ENCODE measurements at regions of chr16 and their contacts with region 1.

Region 1: DNA sequence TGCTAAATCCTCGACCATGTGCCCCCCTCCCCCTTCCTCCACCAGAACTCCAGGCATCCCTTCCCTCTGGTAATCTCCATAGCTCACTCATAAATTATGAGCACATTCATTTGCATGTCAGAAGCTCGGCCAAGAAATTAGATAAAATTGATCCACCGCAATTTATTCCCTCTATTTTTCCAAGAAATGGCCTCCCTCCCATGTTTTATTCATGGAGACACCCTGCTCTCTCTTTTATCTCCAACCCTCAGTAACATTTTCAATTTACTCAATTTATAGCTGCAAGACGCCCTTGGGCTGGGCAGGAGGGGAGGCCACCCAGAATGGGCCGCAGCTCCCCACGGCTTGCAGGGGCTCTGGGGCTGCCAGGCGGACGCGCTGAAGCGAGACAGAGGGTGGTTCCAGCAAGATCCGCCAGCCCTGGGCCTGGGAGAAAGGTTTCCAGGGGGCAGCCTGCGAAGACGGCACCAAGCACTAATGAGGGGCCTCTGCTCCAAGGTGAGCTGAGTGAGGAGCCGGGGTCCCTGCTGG is 54.7 kb upstream of the ZNF423 start:
- DNase-seq: no peak
- H3K4me3 ChIP-seq: no peak overlapping the region
- H3K27ac ChIP-seq: no peak overlapping the region
- H3K4me1 ChIP-seq: no peaks in the 10 kb centered on the region
- H3K27me3 ChIP-seq: no peaks in the 10 kb centered on the region
- CTCF ChIP-seq: no peak
- EP300 ChIP-seq: no peak
- POLR2A ChIP-seq: no peak

Region 2: DNA sequence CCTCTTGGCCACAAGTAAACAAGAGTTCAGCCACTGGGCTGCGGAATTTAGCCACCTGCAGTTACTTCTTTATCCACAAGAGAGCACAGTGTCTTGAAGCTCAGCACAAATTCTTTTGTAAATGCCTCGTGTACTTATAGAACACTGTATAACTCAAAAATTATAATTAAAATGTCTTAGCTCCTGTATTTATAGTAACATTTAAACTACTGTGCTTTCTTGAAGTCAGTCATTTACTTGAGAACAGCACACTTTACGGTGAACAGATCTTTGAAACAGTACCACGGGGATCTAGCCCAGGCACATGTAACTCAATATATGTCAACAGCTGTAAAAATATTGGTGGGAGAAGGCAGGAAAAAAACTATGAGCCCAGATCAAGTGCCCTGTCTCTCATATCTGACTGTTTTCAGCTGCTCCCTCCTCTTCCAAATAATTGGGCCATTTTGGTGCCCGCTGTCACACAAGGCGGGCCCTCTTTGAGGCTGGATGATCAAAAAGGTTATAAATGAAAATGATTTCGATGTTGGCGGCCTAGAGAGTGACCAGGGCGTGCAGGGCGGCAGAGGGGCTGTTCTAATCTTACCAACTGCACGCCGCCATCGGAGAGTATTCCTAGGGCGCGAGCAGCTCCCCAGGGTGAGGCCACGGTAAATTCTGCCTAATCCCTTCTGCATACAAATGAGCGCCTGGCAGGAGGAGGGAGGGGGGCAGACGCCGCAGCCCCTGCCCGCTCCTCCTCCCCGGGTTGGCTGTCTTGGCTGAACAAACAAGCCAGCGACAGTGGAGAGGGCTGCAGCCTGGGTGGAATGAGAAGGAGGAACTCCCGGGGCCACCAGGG is 353.8 kb before region 1 on chr16:
- in situ Hi-C with region 1: no loop called
- intact Hi-C with region 1: no loop called
- DNase-seq: no peak
- H3K4me3 ChIP-seq: no peak overlapping the region
- H3K27ac ChIP-seq: no peak overlapping the region
- H3K4me1 ChIP-seq: no peaks in the 10 kb centered on the region
- H3K27me3 ChIP-seq: no peaks in the 10 kb centered on the region
- CTCF ChIP-seq: peak; percentile 27 to 40 (median 35)
- EP300 ChIP-seq: no peak
- POLR2A ChIP-seq: no peak

Region 3: GRCh38 chr16:49890876-49891275 is 19.7 kb before region 1 on chr16:
- in situ Hi-C with region 1: no loop called
- intact Hi-C with region 1: no loop called
- DNase-seq: peak; percentile 72
- H3K4me3 ChIP-seq: no peak overlapping the region
- H3K27ac ChIP-seq: no peak overlapping the region
- H3K4me1 ChIP-seq: no peaks in the 10 kb centered on the region
- H3K27me3 ChIP-seq: no peaks in the 10 kb centered on the region
- CTCF ChIP-seq: peak; percentile 30 to 68 (median 44)
- EP300 ChIP-seq: no peak
- POLR2A ChIP-seq: no peak

Region 4: DNA sequence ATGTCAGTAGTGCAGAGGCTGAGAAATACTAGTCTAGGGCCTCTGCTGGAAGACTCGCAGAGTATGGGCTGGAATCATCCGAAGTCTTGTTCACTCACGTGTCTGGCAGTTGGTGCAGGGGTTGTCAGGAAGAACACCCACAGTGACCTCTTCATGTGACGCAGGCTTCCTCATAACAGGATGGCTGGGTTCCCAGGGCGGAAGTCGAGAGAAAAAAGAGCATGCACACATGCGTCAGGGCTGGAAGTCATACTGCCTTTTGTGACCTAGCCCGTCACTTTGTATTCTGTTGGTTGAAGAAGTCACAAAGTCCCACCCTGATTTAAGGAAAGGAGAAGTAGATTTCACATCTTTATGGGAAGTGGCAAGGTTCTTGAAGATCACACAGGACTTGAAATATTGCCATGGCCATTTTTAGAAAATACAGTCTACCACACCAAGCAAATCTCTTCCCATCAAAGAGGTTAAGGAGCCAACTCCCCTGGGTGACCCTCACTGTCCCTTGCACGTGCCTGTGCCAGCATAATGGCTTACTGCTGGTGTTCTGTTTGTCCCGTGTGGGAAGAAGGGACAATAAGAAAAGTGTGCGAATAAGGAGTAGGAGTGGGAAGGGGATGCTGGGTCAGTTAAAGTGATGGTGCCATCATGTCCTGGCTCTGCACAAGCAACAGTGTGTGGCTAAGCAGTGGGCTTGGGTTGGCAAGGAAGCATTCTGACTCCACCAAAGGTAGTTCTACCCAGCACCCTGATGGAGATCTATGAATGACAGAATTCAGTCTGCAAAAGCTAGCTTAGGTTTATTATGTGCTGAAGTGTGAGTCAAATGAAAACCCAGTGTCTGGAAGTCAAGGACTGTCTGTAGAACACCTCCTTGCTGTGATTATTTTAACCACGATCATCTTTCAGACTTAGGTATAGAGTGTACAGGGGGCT is 183.3 kb after region 1 on chr16:
- in situ Hi-C with region 1: no loop called
- intact Hi-C with region 1: no loop called
- DNase-seq: peak; percentile 34
- H3K4me3 ChIP-seq: no peak overlapping the region
- H3K27ac ChIP-seq: peak overlapping the region; percentile 28 to 57 (median 37)
- H3K4me1 ChIP-seq: no peaks in the 10 kb centered on the region
- H3K27me3 ChIP-seq: no peaks in the 10 kb centered on the region
- CTCF ChIP-seq: no peak
- EP300 ChIP-seq: no peak
- POLR2A ChIP-seq: no peak

Region 5: DNA sequence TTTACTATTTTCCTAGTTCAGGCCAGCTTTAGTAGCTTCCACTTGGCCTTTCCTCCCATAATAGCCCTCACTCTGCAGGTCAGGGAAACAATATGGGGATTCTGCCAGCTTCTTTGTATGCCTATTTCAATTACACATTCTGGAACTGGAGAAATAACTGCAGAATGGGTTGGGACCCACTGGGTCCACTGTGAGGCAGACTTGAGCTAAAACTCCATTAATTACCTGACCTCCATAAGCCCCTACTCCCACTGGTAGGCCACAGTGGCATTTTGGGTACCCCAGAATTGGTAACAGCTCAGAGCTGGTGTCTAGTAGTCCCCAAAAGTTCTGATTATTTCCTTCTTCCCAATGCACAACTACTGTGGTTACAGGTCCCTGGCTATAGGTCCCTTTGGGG is 225.8 kb after region 1 on chr16:
- in situ Hi-C with region 1: no loop called
- intact Hi-C with region 1: no loop called
- DNase-seq: no peak
- H3K4me3 ChIP-seq: no peak overlapping the region
- H3K27ac ChIP-seq: no peak overlapping the region
- H3K4me1 ChIP-seq: no peaks in the 10 kb centered on the region
- H3K27me3 ChIP-seq: no peaks in the 10 kb centered on the region
- CTCF ChIP-seq: no peak
- EP300 ChIP-seq: no peak
- POLR2A ChIP-seq: no peak

Region 6: DNA sequence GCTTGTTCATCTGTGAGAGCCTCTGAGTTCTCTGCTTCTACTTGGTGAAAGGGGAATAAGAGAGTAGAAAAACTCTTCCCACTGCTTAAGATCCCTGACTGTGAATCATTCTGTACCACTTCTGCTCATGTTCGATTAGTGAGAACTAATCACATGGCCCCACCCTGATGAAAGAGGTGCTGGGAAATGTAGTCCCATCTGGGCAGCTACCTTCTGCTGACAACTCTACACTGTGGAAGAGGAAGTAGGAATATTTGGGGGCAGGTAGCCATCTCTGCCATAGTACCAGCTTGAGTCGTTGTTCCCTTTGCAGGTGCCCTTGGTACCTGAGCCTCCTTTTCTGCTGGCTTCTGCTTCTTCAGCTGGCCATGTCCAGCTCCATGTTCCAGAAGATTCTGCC is 667.5 kb after region 1 on chr16:
- in situ Hi-C with region 1: no loop called
- intact Hi-C with region 1: loop called (anchors 5 kb)
- DNase-seq: no peak
- H3K4me3 ChIP-seq: no peak overlapping the region
- H3K27ac ChIP-seq: no peak overlapping the region
- H3K4me1 ChIP-seq: peaks cover 0 to 18% (median 8%) of the 10 kb centered on the region in 4 donors
- H3K27me3 ChIP-seq: no peaks in the 10 kb centered on the region
- CTCF ChIP-seq: no peak
- EP300 ChIP-seq: no peak
- POLR2A ChIP-seq: no peak